ENCODE measurements at regions of chr1 and their contacts with region 1.

Region 1: GRCh38 chr1:234065794-234066447 is 161.4 kb downstream of the SLC35F3 start:
- DNase-seq: peak in 1 of 2 experiments; percentile 75
- H3K4me3 ChIP-seq: no peak overlapping the region
- H3K27ac ChIP-seq: no peak overlapping the region
- H3K4me1 ChIP-seq: no peaks in the 10 kb centered on the region
- H3K27me3 ChIP-seq: no peaks in the 10 kb centered on the region
- CTCF ChIP-seq: peak; percentile 83

Region 2: GRCh38 chr1:233304489-233305102 is 761.3 kb before region 1 on chr1:
- CTCF ChIA-PET with region 1: no interaction called
- POLR2A ChIA-PET with region 1: no interaction called
- intact Hi-C with region 1: loop called (anchors 5 kb)
- DNase-seq: no peak
- H3K4me3 ChIP-seq: no peak overlapping the region
- H3K27ac ChIP-seq: no peak overlapping the region
- H3K4me1 ChIP-seq: no peaks in the 10 kb centered on the region
- H3K27me3 ChIP-seq: no peaks in the 10 kb centered on the region
- CTCF ChIP-seq: peak; percentile 78

Region 3: DNA sequence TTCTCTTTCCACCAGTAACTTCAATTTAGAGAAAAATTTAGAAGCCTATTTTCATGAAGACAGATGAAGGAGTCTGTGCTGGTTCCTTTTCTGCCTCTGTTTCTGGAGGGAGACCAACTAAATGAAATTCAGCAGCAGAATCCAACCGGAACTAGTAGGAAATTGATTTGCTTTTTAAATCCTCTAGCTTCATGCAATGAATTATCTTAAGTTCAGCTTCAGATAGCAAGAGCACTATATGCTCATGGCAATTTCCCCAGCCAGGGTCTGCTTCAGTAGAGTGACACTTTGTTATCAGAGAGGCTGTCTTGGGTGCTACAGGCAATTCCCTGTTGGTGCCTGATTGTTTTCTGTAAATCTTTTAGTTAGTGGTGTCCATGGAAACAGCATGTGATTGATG is 28.3 kb after region 1 on chr1:
- CTCF ChIA-PET with region 1: no interaction called
- POLR2A ChIA-PET with region 1: no interaction called
- intact Hi-C with region 1: no loop called
- DNase-seq: no peak
- H3K4me3 ChIP-seq: no peak overlapping the region
- H3K27ac ChIP-seq: no peak overlapping the region
- H3K4me1 ChIP-seq: no peaks in the 10 kb centered on the region
- H3K27me3 ChIP-seq: no peaks in the 10 kb centered on the region
- CTCF ChIP-seq: no peak

Measured in PC-9 (cell line).